ENCODE measurements at regions of chr6 and their contacts with region 1.

Region 1: DNA sequence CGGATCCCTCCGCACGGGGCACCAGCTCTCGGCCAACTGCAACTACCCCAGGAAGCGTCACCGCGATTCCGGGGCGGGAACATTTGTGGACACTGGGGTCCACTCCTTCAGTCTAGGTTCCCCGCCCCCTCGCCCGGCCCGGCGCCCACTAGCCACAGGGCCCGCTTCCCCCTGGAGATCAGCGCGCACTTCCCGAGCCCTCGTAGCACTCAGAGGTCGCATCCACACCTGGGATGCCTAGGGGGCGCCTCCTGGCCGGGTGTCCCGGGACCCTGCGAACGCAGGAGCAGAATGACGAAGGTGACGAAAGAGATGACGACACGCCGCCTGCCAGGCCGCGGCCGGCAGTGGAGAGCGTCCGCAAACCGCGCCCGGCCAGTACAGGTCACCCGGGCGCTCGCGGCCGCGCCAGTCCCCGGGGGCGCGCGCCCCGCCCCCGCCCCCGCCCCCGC is 309 bp upstream of the AIG1 start:
- DNase-seq: peak; percentile 94
- ATAC-seq: peak; percentile 88

Region 2: DNA sequence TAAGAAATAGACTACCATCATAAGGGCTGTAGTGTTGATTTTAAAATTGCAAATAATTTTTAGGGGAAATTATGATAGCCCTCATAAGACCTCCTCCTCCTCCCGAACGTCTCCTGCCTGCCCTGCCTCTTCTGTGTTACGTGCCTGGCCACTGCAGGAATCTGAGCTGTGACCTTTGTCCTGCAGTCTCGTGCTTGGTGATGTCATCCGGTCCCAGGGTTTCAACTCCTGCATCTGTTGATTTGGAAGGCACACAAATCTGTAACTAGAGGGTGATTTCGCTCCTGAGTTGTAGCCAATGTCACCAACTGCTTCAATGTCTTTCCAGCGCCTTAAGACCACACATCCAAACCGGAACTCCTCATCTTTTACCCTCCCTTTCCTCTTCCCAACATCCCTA is 163.5 kb after region 1 on chr6:
- intact Hi-C with region 1: loop called (anchors 5 kb)
- DNase-seq: no peak
- ATAC-seq: peak; percentile 78

Region 3: GRCh38 chr6:143271024-143271423 is 210.6 kb after region 1 on chr6:
- intact Hi-C with region 1: loop called (anchors 5 kb)
- DNase-seq: no peak
- ATAC-seq: peak; percentile 75

Region 4: GRCh38 chr6:143427109-143427817 is 366.9 kb after region 1 on chr6:
- intact Hi-C with region 1: no loop called
- DNase-seq: peak; percentile 77
- ATAC-seq: peak; percentile 92